ENCODE measurements at regions of chr10 and their contacts with region 1.

Region 1: DNA sequence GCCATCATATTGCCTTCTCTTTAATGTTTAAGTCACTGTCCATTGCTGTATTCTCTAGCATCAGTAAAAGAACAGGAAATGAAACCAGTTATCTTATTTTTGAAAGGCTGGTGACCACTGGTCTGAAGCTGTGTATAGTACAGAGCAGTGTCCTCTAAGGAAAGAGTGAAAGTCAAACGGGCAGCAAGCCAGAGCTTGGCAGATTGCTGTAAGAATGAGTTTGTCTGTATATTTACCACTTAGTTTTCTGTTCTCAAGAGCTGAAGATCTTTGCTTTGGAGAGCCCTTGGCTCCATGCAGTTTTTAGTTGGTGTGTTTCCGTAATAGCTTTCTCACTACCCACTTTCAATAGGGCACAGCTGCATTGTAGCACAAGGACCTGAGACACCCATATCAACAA is 31.9 kb downstream of the PCBD1 start:
- DNase-seq: no peak
- ATAC-seq: peak; percentile 83
- H3K4me3 ChIP-seq: no peak overlapping the region
- H3K27ac ChIP-seq: no peak overlapping the region
- H3K4me1 ChIP-seq: 0 out of 2 replicates have a peak, but pooled peaks cover 2% of the 10 kb centered on the region
- H3K27me3 ChIP-seq: no peaks in the 10 kb centered on the region
- CTCF ChIP-seq: no peak
- EP300 ChIP-seq: no peak
- POLR2A ChIP-seq: no peak
- RAD21 ChIP-seq: no peak

Region 2: GRCh38 chr10:70872291-70872690 is 15.8 kb after region 1 on chr10:
- CTCF ChIA-PET with region 1: interaction called, 12 read pairs
- POLR2A ChIA-PET with region 1: no interaction called
- RAD21 ChIA-PET with region 1: no interaction called
- SMC1A ChIA-PET with region 1: interaction called, 5 read pairs
- in situ Hi-C with region 1: no loop called
- intact Hi-C with region 1: no loop called
- DNase-seq: no peak
- ATAC-seq: no peak
- H3K4me3 ChIP-seq: no peak overlapping the region
- H3K27ac ChIP-seq: no peak overlapping the region
- H3K4me1 ChIP-seq: no peaks in the 10 kb centered on the region
- H3K27me3 ChIP-seq: no peaks in the 10 kb centered on the region
- CTCF ChIP-seq: no peak
- EP300 ChIP-seq: no peak
- POLR2A ChIP-seq: no peak
- RAD21 ChIP-seq: no peak

Region 3: DNA sequence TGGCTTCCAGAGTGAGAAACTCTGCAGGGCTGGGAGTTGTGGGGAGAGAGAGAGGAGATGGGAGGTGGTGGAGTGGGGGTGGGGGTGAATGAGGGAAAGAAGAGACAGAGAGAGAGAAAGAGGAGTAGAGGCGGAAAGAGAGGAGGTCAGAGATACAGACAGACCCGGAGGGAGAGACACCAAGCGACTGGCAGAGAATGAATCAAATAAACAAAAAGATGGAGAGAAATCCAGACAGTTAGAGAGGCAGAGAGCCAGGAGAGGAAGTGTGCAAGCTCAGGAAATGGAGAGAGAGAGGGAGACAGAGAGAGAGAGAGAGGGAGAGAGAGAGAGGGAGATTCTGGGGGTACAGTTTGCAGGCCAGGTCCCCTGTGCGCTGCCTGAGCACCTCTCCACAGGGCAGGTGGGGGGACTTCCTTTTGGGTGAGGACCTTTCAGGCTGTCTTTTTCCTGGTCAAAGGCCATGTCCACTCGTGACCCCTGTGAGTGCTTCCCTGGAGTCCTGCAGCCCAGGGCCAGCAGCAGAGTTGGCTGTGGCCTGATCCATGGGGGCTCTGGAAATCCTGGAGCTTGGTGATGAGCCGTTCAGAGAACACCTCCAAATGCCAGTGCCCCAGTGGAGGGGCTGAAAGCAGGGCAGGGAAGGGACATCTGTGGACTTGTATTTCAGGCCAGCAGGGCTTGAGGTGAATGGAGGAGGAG is 56.9 kb after region 1 on chr10:
- CTCF ChIA-PET with region 1: no interaction called
- POLR2A ChIA-PET with region 1: no interaction called
- RAD21 ChIA-PET with region 1: no interaction called
- SMC1A ChIA-PET with region 1: no interaction called
- in situ Hi-C with region 1: no loop called
- intact Hi-C with region 1: no loop called
- DNase-seq: no peak
- ATAC-seq: no peak
- H3K4me3 ChIP-seq: no peak overlapping the region
- H3K27ac ChIP-seq: no peak overlapping the region
- H3K4me1 ChIP-seq: no peaks in the 10 kb centered on the region
- H3K27me3 ChIP-seq: no peaks in the 10 kb centered on the region; a peak in 2 of 4 replicates
- CTCF ChIP-seq: no peak
- EP300 ChIP-seq: no peak
- POLR2A ChIP-seq: no peak
- RAD21 ChIP-seq: no peak

Measured in GM12878 (cell line).